PC-3 (cell line): ENCODE measurements at regions of chr4 and their contacts with region 1.

Region 1: DNA sequence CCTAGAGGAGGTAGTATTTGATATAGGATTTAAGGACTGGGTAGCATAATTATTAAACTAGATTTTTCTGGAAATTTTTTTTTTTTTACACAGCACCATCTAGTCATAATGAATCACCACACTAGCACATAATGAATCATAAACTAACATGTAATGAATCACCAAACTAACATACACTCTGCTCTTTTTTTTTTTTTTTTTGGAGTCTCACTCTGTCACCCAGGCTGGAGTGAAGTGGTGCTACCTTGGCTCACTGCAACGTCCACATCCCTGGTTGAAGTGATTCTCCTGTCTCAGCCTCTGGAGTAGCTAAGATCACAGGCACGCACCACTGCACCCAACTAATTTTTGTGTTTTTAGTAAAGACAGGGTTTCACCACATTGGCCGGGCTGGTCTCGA is 92.5 kb downstream of the FAM13A start:
- DNase-seq: peak; percentile 55
- ATAC-seq: peak; percentile 68
- H3K4me3 ChIP-seq: no peak overlapping the region
- H3K27ac ChIP-seq: peak overlapping the region; percentile 90
- H3K4me1 ChIP-seq: peaks cover 49% of the 10 kb centered on the region
- H3K27me3 ChIP-seq: no peaks in the 10 kb centered on the region
- CTCF ChIP-seq: no peak

Region 2: DNA sequence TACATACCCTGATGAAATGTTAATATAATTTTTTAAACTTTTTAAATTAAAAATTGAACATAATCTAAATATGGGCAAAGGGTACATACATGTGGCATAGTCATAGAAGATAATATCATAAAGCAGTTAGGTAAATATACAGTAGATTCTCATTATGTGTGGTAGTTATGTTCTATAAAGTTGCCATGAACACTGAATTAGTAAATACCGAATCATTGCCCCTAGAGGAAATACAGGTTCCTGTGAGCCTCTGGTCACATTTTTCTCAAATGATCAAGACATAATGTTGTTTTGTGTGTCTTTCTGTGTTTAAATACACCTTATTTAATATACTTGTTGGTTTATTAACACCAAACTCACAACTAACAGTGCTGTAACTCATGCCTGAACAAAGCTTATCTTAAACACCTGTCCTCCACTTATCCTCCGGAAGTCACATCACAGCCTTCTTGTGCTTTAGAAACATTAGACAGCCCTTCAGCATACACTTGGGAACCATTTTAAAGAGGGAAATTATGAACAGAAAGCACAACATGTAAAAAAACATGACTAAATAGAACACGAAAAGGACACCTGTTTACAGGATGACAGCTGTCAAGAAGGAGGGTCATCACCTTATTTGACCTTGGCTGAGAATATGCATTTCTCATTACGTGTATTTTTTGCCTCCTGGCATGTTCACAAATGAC is 97.4 kb before region 1 on chr4:
- CTCF ChIA-PET with region 1: no interaction called
- POLR2A ChIA-PET with region 1: no interaction called
- intact Hi-C with region 1: loop called (anchors 1 kb)
- DNase-seq: peak; percentile 88
- ATAC-seq: peak; percentile 90
- H3K4me3 ChIP-seq: peak overlapping the region; percentile 0; the same call in 1 of the 2 replicates
- H3K27ac ChIP-seq: peak overlapping the region; percentile 90
- H3K4me1 ChIP-seq: peaks cover 44% of the 10 kb centered on the region
- H3K27me3 ChIP-seq: no peaks in the 10 kb centered on the region
- CTCF ChIP-seq: no peak

Region 3: DNA sequence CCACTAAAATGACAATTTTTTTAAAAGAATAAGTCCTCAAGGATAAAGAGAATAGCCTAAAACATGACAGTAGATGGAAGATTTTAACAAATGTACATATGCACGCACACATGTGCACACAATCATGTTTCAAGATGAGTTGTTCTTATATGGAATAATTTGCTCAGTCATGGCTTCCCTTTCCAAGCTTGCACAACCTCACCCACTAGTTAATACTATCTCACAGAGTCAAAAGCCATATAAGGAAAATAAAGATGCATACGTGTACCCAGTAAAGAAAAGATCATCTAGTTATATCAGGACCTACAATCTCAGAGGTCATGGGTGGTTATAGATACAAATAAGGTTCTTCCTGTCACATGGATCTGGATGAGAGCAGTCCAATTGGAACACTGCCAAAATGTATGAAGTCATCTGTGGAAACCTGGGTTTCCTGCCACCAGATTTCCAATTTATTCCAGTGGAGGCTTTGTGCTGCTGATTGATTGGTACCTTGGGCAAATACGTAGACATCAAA is 36.5 kb after region 1 on chr4:
- CTCF ChIA-PET with region 1: no interaction called
- POLR2A ChIA-PET with region 1: no interaction called
- intact Hi-C with region 1: loop called (anchors 5 kb)
- DNase-seq: peak; percentile 65
- ATAC-seq: peak; percentile 15
- H3K4me3 ChIP-seq: no peak overlapping the region
- H3K27ac ChIP-seq: peak overlapping the region; percentile 10; the same call in 1 of the 2 replicates
- H3K4me1 ChIP-seq: peaks cover 21% of the 10 kb centered on the region
- H3K27me3 ChIP-seq: no peaks in the 10 kb centered on the region
- CTCF ChIP-seq: no peak